ENCODE measurements at regions of chr1 and their contacts with region 1.

Region 1: DNA sequence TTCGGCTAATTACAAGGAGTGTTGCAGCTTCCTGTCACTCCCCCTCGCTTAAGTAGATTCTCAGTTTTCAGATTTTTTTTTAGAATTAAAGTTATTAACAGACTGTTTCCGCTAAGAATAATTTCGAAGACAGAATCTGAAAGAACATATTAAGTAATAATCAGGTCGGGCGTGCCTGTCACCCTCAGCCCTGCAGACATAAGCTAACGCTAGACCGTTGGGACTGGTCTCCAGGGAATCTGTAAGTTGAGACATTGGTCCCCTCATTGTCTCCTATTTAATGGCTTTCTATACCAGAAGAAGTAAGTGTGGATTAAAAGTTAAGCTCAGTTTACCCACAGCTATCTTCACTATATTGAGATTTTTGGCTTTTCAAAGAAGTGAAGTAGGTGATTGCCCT is 14.5 kb downstream of the NMNAT1 start:
- DNase-seq: no peak
- H3K4me3 ChIP-seq: no peak overlapping the region
- H3K27ac ChIP-seq: no peak overlapping the region
- H3K4me1 ChIP-seq: no peaks in the 10 kb centered on the region
- H3K27me3 ChIP-seq: no peaks in the 10 kb centered on the region
- CTCF ChIP-seq: no peak

Region 2: GRCh38 chr1:10283318-10283984 is 325.7 kb after region 1 on chr1:
- intact Hi-C with region 1: no loop called
- DNase-seq: no peak
- H3K4me3 ChIP-seq: no peak overlapping the region
- H3K27ac ChIP-seq: no peak overlapping the region
- H3K4me1 ChIP-seq: peaks cover 9 to 20% of the 10 kb centered on the region in 2 donors
- H3K27me3 ChIP-seq: no peaks in the 10 kb centered on the region
- CTCF ChIP-seq: no peak

Region 3: DNA sequence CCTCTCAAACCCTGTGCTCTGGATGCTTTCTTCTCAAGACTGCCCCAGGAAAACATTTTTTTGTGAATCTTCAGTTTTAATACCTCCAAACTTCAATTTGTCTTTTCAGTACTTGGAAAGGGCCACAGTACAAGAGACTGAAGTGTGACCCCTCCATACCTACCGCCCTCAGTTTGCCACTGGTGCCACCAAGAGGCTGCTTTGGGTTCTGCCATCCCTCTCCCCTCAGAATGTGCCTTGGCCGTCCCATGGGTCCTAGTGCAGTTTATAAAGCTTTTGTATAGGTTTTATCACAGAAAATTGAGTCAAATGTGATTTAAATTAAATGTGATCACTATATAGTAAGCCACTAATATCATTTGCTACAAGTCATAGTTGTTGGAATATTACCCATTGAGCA is 380.3 kb after region 1 on chr1:
- intact Hi-C with region 1: loop called (anchors 5 kb)
- DNase-seq: no peak
- H3K4me3 ChIP-seq: no peak overlapping the region
- H3K27ac ChIP-seq: no peak overlapping the region
- H3K4me1 ChIP-seq: no peaks in the 10 kb centered on the region
- H3K27me3 ChIP-seq: no peaks in the 10 kb centered on the region
- CTCF ChIP-seq: peak; percentile 61 to 84 (median 67)